AG04450 (cell line): ENCODE measurements at regions of chr15 and their contacts with region 1.

Region 1: DNA sequence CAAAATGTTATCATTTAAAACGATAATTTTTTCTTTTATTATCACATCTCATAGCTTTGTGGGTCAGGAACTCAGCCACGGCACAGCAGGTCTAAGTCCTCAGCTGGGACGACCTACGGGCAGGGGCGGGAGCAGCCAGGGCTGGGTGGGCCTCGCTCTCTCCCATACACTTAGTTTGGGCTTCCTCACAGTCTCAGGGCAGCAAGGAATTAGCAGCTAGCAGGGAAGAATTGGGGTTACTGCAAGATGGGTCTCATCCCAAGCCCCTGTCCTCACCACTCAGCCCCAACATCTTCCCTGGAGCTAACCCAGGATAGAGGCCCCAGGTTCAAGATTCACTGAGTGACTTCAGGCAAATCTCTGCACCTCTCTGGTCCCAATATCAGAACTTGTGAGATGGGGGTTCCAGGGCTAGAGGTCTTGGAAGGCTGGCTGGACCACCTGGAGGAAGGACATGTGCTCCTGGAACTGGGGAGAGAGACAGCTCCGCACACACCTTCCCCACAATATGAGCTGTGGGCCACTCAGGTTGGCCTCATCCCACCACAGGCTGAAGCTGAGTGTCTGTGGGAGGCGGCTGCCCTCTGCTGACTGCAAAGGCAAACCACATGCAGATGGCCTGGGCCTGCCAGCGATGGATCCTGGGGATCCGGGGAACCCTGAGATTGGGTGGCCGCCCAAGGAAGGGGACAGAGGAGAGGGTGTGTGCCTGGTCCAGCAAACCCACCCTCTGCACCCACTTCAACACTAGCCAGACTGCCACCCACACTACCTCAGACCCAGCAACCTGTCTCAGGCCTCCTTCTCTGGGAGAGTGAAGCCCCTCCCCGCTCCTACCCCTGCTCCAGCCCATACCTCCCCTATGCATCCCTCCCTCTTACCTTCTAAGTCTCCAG is 45.0 kb downstream of the CYP11A1 start:
- DNase-seq: no peak
- H3K4me3 ChIP-seq: no peak overlapping the region
- H3K27ac ChIP-seq: no peak overlapping the region
- H3K27me3 ChIP-seq: peaks cover 8% of the 10 kb centered on the region
- CTCF ChIP-seq: peak; percentile 93

Region 2: DNA sequence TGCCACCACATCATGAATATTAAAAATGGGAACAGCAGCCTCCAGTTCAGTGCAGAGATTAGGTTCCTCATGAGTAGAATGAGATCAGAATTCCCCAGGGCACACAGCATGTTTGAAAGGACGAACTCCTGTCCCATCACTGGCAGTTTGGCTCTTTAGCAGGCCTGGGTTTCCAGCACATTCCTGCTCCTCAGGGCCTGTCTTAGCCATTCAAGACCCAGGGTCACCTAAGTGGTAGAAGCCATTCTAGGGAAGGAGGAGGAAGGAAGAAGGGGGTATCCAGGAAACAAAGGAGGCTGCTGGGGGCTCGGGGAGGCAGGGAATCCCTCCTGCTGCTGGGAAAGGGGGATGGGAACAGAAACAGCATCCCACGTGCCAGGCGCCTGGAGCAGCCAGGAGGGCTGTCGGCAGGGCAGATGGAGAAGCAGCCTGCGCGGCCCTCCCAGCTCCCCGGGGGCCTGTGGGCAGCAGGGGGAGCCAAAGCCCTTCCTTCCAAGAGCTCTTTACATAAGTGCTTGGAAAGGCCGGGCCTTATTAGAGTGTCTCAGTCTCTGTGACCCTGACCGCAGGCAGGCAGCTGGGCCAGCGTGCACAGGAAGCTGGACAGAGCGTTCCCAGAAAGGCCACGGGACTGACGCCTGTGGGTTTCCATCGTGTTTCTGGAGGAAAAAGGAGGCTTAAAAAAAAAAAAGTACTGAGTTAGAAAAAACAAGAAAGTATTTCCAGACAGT is 371.4 kb before region 1 on chr15:
- CTCF ChIA-PET with region 1: interaction called, 15 read pairs
- POLR2A ChIA-PET with region 1: no interaction called
- DNase-seq: peak; percentile 86
- H3K4me3 ChIP-seq: no peak overlapping the region
- H3K27ac ChIP-seq: peak overlapping the region; percentile 82
- H3K27me3 ChIP-seq: no peaks in the 10 kb centered on the region
- CTCF ChIP-seq: peak; percentile 87

Region 3: DNA sequence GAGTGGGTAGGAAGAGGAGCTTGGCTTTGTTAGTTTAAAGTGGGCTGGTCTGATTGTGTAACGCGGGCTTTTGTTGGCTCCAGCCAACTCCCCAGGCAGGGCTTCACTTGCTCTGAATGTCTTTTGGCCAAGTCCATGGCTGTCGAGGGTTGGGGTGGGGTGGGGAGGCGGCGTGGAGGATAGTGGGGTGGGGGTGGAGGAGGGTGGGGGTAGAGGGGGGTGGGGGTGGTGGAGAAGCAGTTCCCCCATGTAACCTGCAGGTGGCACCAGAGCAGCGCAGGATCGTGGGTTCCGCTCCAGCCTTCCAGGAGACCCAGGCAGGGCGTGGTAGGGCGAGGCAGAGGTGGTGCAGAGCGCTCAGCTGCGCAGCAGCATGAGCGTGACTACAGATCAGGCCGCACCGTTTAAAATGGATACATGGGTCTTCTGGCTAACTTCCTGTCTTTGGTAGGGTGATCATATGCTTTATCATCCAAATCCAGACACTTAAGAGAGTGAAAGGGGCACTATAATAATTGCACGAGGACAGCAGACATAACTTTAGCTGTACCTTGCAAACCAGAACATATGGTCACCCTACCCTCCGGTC is 268.4 kb before region 1 on chr15:
- CTCF ChIA-PET with region 1: interaction called, 69 read pairs
- POLR2A ChIA-PET with region 1: no interaction called
- DNase-seq: peak; percentile 20
- H3K4me3 ChIP-seq: no peak overlapping the region
- H3K27ac ChIP-seq: no peak overlapping the region
- H3K27me3 ChIP-seq: peaks cover 6% of the 10 kb centered on the region
- CTCF ChIP-seq: peak; percentile 67

Region 4: GRCh38 chr15:74062671-74063070 is 259.8 kb before region 1 on chr15:
- CTCF ChIA-PET with region 1: interaction called, 10 read pairs
- POLR2A ChIA-PET with region 1: no interaction called
- DNase-seq: no peak
- H3K4me3 ChIP-seq: no peak overlapping the region
- H3K27ac ChIP-seq: no peak overlapping the region
- H3K27me3 ChIP-seq: peaks cover 21% of the 10 kb centered on the region
- CTCF ChIP-seq: no peak

Region 5: DNA sequence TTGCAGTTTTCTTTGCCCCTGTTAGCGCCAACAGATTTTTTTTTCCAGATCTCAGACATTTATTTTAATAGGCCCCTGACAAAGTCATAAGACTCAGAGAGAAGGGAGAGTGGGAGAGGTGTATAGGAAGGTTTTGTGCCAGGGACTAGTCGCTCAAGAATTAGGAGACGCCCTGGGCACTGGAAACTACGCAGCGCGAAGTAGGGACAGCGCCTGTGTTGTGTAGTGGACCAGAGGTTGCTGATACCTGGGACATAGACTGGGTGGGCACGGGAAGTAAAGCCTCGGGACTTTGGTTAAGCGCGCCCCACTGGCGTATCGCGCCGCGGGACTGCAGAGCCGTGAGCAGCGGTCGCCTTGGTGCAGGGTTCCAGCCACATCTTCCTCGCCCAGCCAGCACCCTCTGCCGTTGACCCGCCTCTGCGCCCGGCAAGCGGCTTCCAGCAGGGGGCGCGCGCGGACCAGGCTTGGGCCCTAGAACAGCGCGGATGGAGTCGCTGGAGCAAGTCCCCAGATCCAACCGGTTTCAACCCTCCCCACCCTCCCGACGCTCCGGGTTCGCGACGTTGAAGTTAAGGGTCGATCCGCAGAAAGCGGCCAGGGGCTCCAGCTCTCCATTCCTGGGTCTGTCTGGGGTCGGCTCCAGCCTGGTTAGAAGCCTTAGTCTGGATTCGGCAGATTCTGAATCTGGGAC is 195.0 kb before region 1 on chr15:
- CTCF ChIA-PET with region 1: interaction called, 55 read pairs
- POLR2A ChIA-PET with region 1: no interaction called
- DNase-seq: peak; percentile 55
- H3K4me3 ChIP-seq: peak overlapping the region; percentile 41
- H3K27ac ChIP-seq: no peak overlapping the region
- H3K27me3 ChIP-seq: peaks cover 87% of the 10 kb centered on the region
- CTCF ChIP-seq: peak; percentile 95

Region 6: GRCh38 chr15:74307827-74308644 is 14.4 kb before region 1 on chr15:
- CTCF ChIA-PET with region 1: interaction called, 101 read pairs
- POLR2A ChIA-PET with region 1: no interaction called
- DNase-seq: no peak
- H3K4me3 ChIP-seq: no peak overlapping the region
- H3K27ac ChIP-seq: no peak overlapping the region
- H3K27me3 ChIP-seq: peaks cover 78% of the 10 kb centered on the region
- CTCF ChIP-seq: peak; percentile 82